ENCODE measurements at regions of chr22 and their contacts with region 1.

Region 1: GRCh38 chr22:35051791-35052190 is 14.2 kb upstream of the ISX start:
- DNase-seq: no peak
- ATAC-seq: no peak
- H3K4me3 ChIP-seq: no peak overlapping the region
- H3K27ac ChIP-seq: no peak overlapping the region
- H3K4me1 ChIP-seq: no peaks in the 10 kb centered on the region
- H3K27me3 ChIP-seq: no peaks in the 10 kb centered on the region
- CTCF ChIP-seq: no peak

Region 2: DNA sequence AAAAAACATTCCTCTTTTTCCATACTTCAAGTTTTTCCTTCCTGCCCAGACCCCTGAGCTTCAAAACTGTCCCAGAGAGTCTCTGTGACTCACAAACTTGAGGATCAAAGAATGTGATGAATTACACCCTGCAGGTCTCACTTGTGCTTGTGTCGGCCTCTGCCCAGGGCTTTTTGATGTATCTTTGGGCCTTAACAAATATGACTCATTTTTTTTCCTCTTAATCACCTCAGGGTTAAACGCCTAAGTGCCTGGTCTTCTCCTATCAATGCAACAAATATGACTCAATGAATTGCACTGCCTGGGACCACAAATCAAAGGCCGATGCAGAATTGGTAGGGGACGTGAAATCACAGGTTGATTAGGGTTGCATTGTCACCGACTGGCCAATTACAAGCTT is 1399.2 kb before region 1 on chr22:
- CTCF ChIA-PET with region 1: interaction called, 10 read pairs
- POLR2A ChIA-PET with region 1: no interaction called
- in situ Hi-C with region 1: no loop called
- intact Hi-C with region 1: no loop called
- DNase-seq: no peak
- ATAC-seq: no peak
- H3K4me3 ChIP-seq: no peak overlapping the region
- H3K27ac ChIP-seq: no peak overlapping the region
- H3K4me1 ChIP-seq: no peaks in the 10 kb centered on the region
- H3K27me3 ChIP-seq: no peaks in the 10 kb centered on the region
- CTCF ChIP-seq: no peak

Region 3: DNA sequence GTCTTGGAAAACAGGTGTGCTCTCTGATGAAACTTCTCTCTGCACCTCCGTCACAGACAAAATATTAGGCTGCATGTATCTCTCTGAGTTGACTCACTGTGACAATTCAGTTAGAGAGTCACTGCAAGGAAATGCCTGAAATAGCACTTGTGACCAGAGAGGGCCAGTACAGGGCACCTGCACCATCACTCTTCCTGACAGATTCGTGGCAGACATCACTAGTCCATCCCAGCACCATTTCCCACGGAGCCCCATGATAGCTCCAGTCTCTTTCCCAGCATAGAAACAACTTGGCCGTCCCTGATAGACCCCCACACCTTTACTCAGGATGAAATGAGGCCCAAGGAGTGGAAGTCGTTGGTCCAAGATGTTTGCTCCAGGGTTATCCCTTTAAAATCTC is 59.1 kb before region 1 on chr22:
- CTCF ChIA-PET with region 1: no interaction called
- POLR2A ChIA-PET with region 1: no interaction called
- in situ Hi-C with region 1: no loop called
- intact Hi-C with region 1: loop called (anchors 10 kb)
- DNase-seq: no peak
- ATAC-seq: no peak
- H3K4me3 ChIP-seq: no peak overlapping the region
- H3K27ac ChIP-seq: no peak overlapping the region
- H3K4me1 ChIP-seq: no peaks in the 10 kb centered on the region
- H3K27me3 ChIP-seq: no peaks in the 10 kb centered on the region
- CTCF ChIP-seq: no peak

Region 4: DNA sequence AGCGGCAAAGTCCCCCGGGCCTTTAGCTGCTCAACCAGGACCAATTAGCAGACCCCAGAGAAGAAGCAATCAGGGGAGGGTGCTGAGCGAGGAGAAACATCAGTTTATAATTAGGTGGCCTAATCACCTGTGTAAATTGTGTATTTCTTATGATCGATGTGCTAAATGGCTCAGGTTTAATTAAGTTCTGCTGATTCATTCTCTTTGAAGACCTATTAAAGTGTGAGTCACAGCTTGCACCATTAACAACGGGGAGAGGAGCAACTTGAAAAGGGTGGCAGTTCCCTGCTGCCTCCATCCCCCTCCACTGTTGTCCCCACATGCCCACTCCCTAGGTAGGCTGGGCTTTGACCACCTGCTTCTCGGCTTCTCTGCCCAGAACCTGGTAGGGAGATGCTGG is 24.8 kb after region 1 on chr22:
- CTCF ChIA-PET with region 1: no interaction called
- POLR2A ChIA-PET with region 1: no interaction called
- in situ Hi-C with region 1: no loop called
- intact Hi-C with region 1: no loop called
- DNase-seq: no peak
- ATAC-seq: no peak
- H3K4me3 ChIP-seq: no peak overlapping the region
- H3K27ac ChIP-seq: no peak overlapping the region
- H3K4me1 ChIP-seq: no peaks in the 10 kb centered on the region
- H3K27me3 ChIP-seq: no peaks in the 10 kb centered on the region
- CTCF ChIP-seq: no peak

Measured in Panc1 (cell line).